Sigmoid colon (tissue), 7 donors: ENCODE measurements at regions of chr11 and their contacts with region 1.

Region 1: DNA sequence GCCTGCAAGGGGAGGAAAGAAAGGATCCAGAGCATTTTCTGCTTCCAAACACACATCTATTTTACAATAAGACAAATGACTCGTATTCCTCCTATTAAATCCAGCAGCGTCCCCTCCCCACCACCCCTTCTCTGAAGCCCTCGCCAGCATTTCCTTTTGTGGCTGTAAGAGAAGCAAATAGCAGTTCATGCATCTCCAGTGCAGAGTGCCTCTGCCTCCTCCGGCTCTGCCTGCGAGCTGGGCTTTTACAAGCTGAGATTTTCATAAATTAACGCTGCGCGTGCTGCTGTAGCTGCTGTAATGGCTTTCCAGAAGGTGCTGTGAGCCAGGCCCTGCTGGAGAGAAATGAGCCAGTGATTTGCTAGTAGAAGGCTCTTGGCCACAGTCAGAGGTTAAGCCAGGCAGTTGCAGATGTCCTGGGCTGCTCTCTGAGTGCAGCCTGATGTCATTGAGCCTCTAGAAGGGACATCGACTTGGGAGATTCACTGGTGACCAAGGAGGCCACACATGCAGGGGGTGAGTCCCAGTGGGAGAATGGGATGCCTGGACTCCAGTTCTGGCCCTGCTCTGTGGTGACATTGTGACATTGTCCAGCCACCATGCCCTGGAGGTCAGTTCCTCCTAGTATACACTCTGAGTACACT is 134.5 kb upstream of the NAV2 start:
- DNase-seq: peak; percentile 96
- H3K4me3 ChIP-seq: no peak overlapping the region
- H3K27ac ChIP-seq: peak overlapping the region; percentile 81 to 94 (median 92)
- H3K4me1 ChIP-seq: peaks cover 0 to 74% (median 68%) of the 10 kb centered on the region in 4 donors
- H3K27me3 ChIP-seq: no peaks in the 10 kb centered on the region
- CTCF ChIP-seq: peak in 1 of 4 experiments; percentile 8
- EP300 ChIP-seq: peak in 2 of 4 donors; percentile 27 to 71
- POLR2A ChIP-seq: no peak

Region 2: GRCh38 chr11:19615341-19616183 is 37.5 kb after region 1 on chr11:
- intact Hi-C with region 1: loop called (anchors 5 kb)
- DNase-seq: no peak
- H3K4me3 ChIP-seq: no peak overlapping the region
- H3K27ac ChIP-seq: peak overlapping the region; percentile 65 to 82 (median 80)
- H3K4me1 ChIP-seq: peaks cover 0 to 30% (median 24%) of the 10 kb centered on the region in 4 donors
- H3K27me3 ChIP-seq: no peaks in the 10 kb centered on the region
- CTCF ChIP-seq: no peak
- EP300 ChIP-seq: no peak
- POLR2A ChIP-seq: no peak

Region 3: DNA sequence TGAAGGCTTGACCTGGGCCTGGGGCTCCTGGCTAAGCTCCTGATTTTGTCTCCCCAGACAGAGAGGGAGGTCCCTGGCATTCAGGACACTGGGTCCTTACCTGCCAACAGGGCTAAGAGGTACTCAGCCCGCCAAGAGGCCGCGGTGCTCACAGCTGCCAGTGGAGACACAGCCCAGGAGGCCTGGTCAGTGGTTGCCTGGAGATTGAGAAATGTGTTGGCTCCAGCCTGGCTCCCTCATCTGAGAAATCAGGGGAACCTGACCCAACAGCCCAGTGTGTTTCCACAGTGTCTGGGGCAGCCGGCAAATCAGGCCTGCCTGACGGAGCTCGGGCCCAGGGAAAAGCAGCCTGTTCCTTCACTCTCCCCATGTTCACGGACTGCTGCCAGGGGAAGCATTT is 55.2 kb after region 1 on chr11:
- intact Hi-C with region 1: loop called (anchors 5 kb)
- DNase-seq: peak; percentile 94
- H3K4me3 ChIP-seq: no peak overlapping the region
- H3K27ac ChIP-seq: peak overlapping the region; percentile 12 to 82 (median 73)
- H3K4me1 ChIP-seq: peaks cover 0 to 35% (median 20%) of the 10 kb centered on the region in 4 donors
- H3K27me3 ChIP-seq: no peaks in the 10 kb centered on the region
- CTCF ChIP-seq: no peak
- EP300 ChIP-seq: peak in 1 of 4 donors; percentile 71
- POLR2A ChIP-seq: no peak

Region 4: GRCh38 chr11:19679952-19680828 is 102.1 kb after region 1 on chr11:
- intact Hi-C with region 1: loop called (anchors 2 kb)
- DNase-seq: peak; percentile 96
- H3K4me3 ChIP-seq: peak overlapping the region in 1 of 4 donors; percentile 5
- H3K27ac ChIP-seq: peak overlapping the region; percentile 85 to 93 (median 88)
- H3K4me1 ChIP-seq: peaks cover 0 to 96% (median 86%) of the 10 kb centered on the region in 4 donors
- H3K27me3 ChIP-seq: no peaks in the 10 kb centered on the region
- CTCF ChIP-seq: no peak
- EP300 ChIP-seq: peak in 3 of 4 donors; percentile 4 to 94 (median 85)
- POLR2A ChIP-seq: no peak

Region 5: DNA sequence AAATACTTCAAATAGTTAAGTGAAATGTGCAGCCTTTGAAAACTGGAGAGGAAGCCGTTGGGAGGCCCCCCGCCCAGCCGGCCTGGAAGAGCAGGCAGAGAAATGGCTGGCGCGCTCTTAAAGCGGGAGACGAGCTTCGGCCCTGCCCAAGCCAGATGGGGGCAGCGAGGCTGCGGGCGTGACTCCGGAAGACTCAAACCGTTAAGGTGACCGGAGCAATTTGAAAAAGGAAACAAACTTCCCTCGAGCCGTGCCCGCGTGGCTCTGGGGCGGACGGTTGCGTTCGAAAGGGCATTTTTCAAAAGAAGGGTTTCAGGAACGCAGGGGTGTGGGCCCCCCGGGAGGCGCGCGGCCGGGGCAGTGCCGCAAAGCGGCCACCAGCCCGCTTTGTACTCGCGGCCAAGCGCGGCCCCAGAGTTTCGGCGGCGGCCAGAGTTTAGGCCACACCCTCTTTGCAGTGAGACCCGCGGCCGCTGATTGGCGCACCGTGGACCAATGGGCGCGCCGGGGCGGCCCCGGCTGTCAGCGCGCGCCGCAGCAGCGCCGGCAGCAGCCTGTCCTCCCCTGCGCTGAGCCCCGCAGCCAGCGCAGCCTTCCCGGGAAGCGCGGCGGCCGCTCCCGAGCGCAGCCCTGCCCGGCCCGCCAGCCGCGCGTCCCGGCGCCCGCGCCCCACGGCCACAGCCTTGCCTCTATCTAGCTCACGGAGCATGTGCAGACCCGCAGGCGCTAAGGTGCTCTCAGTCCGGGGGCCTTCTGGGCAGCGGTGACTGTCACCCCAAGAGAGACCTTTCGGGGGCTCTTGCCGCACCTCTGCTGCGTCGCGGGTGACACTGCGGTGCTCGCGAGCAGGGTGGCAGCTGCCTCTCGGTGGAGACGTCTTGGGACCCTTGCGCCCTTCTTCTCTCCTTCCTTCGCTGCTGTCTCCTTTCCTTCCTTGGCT is 134.5 kb after region 1 on chr11 and contains the start of gene NAV2:
- intact Hi-C with region 1: loop called (anchors 2 kb)
- DNase-seq: peak; percentile 97
- H3K4me3 ChIP-seq: peak within 1 kb of the TSS; percentile 62 to 85 (median 72)
- H3K27ac ChIP-seq: peak within 1 kb of the TSS; percentile 93 to 98 (median 96)
- H3K4me1 ChIP-seq: peaks cover 0 to 61% (median 54%) of the 10 kb centered on the region in 4 donors
- H3K27me3 ChIP-seq: no peaks in the 10 kb centered on the region
- CTCF ChIP-seq: no peak
- EP300 ChIP-seq: peak in 1 of 4 donors; percentile 42
- POLR2A ChIP-seq: peak; percentile 89 to 95
- total RNA-seq, gene NAV2: 22.1 to 62.6 (median 38.2) TPM